MCF 10A (cell line): ENCODE measurements at regions of chr2 and their contacts with region 1.

Region 1: DNA sequence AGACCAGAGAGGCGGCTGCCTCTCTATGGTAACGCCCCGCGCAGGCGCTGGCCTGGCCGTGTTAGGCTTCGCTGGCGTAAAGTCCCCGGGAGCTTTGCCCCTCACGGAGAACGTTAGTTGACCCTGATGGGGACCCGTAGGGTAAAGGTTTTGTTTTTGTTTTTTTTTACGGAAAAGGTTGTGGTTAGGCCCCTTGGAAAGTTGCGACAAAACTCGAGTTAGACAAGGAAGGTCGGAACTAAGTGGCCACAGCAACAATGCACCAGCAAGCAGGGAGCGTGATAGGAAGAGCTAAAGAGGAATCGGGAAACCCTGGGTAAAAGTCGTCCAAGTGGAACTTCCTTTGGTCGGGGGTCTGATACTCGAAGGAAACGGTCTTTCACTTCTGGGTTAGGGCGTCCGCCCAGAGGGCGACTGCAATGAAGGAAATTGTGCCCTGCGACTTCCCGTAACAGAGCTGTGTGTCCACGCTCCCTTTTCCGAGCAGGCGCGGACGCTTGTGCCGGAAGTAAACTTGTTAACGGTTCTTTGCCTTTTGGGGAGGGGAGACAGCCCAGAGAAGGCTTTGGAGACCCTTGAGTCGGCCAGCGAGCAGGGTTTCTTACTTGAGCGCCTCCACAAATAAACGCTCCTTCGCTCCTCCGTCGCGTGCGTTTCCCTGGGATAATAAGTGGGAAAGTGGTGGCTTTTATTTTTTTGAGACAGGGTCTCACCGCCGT is 493 bp upstream of the CLASP1 start:
- DNase-seq: peak; percentile 97
- H3K4me3 Mint-ChIP-seq: peak overlapping the region; percentile 89
- H3K27ac Mint-ChIP-seq: peak overlapping the region; percentile 97
- H3K4me1 Mint-ChIP-seq: peaks cover 25% of the 10 kb centered on the region
- H3K27me3 Mint-ChIP-seq: no peaks in the 10 kb centered on the region
- CTCF ChIP-seq: no peak

Region 2: GRCh38 chr2:121505005-121505404 is 144.8 kb before region 1 on chr2:
- CTCF ChIA-PET with region 1: no interaction called
- POLR2A ChIA-PET with region 1: interaction called, 11 read pairs
- intact Hi-C with region 1: no loop called
- DNase-seq: peak; percentile 86
- H3K4me3 Mint-ChIP-seq: peak overlapping the region; percentile 62
- H3K27ac Mint-ChIP-seq: peak overlapping the region; percentile 72
- H3K4me1 Mint-ChIP-seq: peaks cover 61% of the 10 kb centered on the region
- H3K27me3 Mint-ChIP-seq: no peaks in the 10 kb centered on the region
- CTCF ChIP-seq: no peak

Region 3: GRCh38 chr2:121626777-121627524 is 22.8 kb before region 1 on chr2:
- CTCF ChIA-PET with region 1: no interaction called
- POLR2A ChIA-PET with region 1: interaction called, 78 read pairs
- intact Hi-C with region 1: no loop called
- DNase-seq: peak; percentile 83
- H3K4me3 Mint-ChIP-seq: peak overlapping the region; percentile 22
- H3K27ac Mint-ChIP-seq: peak overlapping the region; percentile 73
- H3K4me1 Mint-ChIP-seq: peaks cover 13% of the 10 kb centered on the region
- H3K27me3 Mint-ChIP-seq: no peaks in the 10 kb centered on the region
- CTCF ChIP-seq: no peak

Region 4: GRCh38 chr2:121665504-121665903 is 15.7 kb after region 1 on chr2:
- CTCF ChIA-PET with region 1: interaction called, 3 read pairs
- POLR2A ChIA-PET with region 1: interaction called, 113 read pairs
- intact Hi-C with region 1: no loop called
- DNase-seq: peak; percentile 69
- H3K4me3 Mint-ChIP-seq: no peak overlapping the region
- H3K27ac Mint-ChIP-seq: peak overlapping the region; percentile 76
- H3K4me1 Mint-ChIP-seq: peaks cover 27% of the 10 kb centered on the region
- H3K27me3 Mint-ChIP-seq: no peaks in the 10 kb centered on the region
- CTCF ChIP-seq: no peak

Region 5: DNA sequence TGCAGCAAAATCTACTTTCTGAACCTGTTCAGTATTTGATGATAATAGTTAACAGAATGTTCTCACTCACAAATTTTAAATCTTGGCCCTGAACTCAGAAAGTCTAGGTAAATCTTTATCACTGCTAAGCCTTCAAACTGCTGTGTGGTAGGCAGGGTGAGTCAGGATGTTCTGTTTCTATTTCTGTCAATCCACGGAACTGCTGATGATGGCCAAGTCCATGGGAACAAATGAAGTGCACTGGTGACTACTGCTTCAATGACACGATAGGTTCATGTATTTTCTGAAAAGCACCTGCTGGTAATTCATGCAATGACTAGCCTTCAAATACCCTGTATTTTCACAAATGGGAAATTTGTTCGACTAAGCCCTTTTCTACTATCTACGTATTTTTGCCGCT is 72.7 kb after region 1 on chr2:
- CTCF ChIA-PET with region 1: interaction called, 3 read pairs
- POLR2A ChIA-PET with region 1: interaction called, 16 read pairs
- intact Hi-C with region 1: loop called (anchors 1 kb)
- DNase-seq: peak; percentile 72
- H3K4me3 Mint-ChIP-seq: peak overlapping the region; percentile 60
- H3K27ac Mint-ChIP-seq: peak overlapping the region; percentile 87
- H3K4me1 Mint-ChIP-seq: peaks cover 13% of the 10 kb centered on the region
- H3K27me3 Mint-ChIP-seq: no peaks in the 10 kb centered on the region
- CTCF ChIP-seq: no peak

Region 6: DNA sequence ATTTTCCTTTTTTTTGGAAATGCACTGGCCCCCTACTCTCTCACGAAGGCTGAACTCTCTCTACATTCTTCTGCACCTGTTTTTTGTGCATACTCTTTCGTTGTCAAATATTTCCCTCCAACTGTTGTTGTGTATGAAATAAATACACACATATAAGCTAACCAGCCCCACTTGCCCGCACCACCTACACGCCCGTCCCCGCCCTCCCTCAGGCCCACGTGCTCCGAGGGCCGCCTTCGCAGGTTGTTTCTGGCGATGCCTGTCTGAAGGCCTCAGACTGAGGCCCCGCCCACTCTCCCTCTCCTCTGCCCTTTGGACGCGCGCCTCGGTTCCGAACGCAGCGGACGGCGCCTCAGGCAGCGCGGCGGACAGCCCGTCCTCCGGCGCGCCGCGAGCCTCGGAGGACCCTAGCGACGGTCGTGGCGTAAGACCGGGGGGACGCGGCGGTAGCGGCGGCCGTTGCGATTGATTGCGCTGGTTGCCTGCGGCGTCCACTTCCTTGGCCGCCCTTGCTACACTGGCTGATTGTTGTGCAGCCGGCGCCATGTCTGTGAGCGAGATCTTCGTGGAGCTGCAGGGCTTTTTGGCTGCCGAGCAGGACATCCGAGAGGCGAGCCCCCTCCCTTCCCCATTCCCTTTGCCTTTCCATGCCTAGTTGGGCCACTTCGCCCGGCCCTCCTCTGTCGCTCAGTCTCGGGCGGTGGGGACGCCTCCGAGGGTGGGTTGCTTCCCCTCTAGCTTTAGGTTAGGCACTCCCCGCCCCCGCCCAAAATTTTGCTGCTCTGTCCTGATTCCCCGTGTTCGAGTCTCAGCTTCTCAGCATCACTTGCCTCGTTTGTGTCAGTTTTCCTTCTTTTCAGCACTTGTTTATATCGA is 105.7 kb after region 1 on chr2 and contains the start of gene TSN:
- CTCF ChIA-PET with region 1: no interaction called
- POLR2A ChIA-PET with region 1: interaction called, 12 read pairs
- intact Hi-C with region 1: no loop called
- DNase-seq: peak; percentile 98
- H3K4me3 Mint-ChIP-seq: peak within 1 kb of the TSS; percentile 79
- H3K27ac Mint-ChIP-seq: peak within 1 kb of the TSS; percentile 91
- H3K4me1 Mint-ChIP-seq: peaks cover 6% of the 10 kb centered on the region
- H3K27me3 Mint-ChIP-seq: no peaks in the 10 kb centered on the region
- CTCF ChIP-seq: no peak
- total RNA-seq, gene TSN: 60.7 and 78.2 TPM in 2 replicates

Region 7: GRCh38 chr2:122244595-122245229 is 595.0 kb after region 1 on chr2:
- CTCF ChIA-PET with region 1: no interaction called
- POLR2A ChIA-PET with region 1: no interaction called
- intact Hi-C with region 1: no loop called
- DNase-seq: peak; percentile 35
- H3K4me3 Mint-ChIP-seq: no peak overlapping the region
- H3K27ac Mint-ChIP-seq: peak overlapping the region; percentile 32
- H3K4me1 Mint-ChIP-seq: peaks cover 19% of the 10 kb centered on the region
- H3K27me3 Mint-ChIP-seq: no peaks in the 10 kb centered on the region
- CTCF ChIP-seq: no peak